ENCODE measurements at regions of chr16 and their contacts with region 1.

Region 1: GRCh38 chr16:4271176-4272066 is 1.4 kb downstream of the TFAP4 start:
- DNase-seq: peak; percentile 97
- H3K4me3 Mint-ChIP-seq: peak overlapping the region; percentile 89
- H3K27ac Mint-ChIP-seq: peak overlapping the region; percentile 96
- H3K4me1 Mint-ChIP-seq: peaks cover 11% of the 10 kb centered on the region
- H3K27me3 Mint-ChIP-seq: no peaks in the 10 kb centered on the region

Region 2: GRCh38 chr16:4253394-4254150 is 17.8 kb before region 1 on chr16:
- intact Hi-C with region 1: loop called (anchors 1 kb)
- DNase-seq: peak; percentile 100
- H3K4me3 Mint-ChIP-seq: peak overlapping the region; percentile 95
- H3K27ac Mint-ChIP-seq: peak overlapping the region; percentile 100
- H3K4me1 Mint-ChIP-seq: peaks cover 5% of the 10 kb centered on the region
- H3K27me3 Mint-ChIP-seq: no peaks in the 10 kb centered on the region

Region 3: GRCh38 chr16:4307215-4308037 is 36.0 kb after region 1 on chr16:
- intact Hi-C with region 1: loop called (anchors 1 kb)
- DNase-seq: peak; percentile 99
- H3K4me3 Mint-ChIP-seq: peak overlapping the region; percentile 98
- H3K27ac Mint-ChIP-seq: peak overlapping the region; percentile 98
- H3K4me1 Mint-ChIP-seq: peaks cover 26% of the 10 kb centered on the region
- H3K27me3 Mint-ChIP-seq: peaks cover 2% of the 10 kb centered on the region

Region 4: GRCh38 chr16:4350787-4351659 is 79.6 kb after region 1 on chr16 and contains the start of gene PAM16:
- intact Hi-C with region 1: loop called (anchors 2 kb)
- DNase-seq: peak; percentile 100
- H3K4me3 Mint-ChIP-seq: peak within 1 kb of the TSS; percentile 96
- H3K27ac Mint-ChIP-seq: peak within 1 kb of the TSS; percentile 94
- H3K4me1 Mint-ChIP-seq: peaks cover 12% of the 10 kb centered on the region
- H3K27me3 Mint-ChIP-seq: no peaks in the 10 kb centered on the region
- total RNA-seq, gene PAM16: 93.5 and 104 TPM in 2 replicates

Measured in activated CD4-positive, alpha-beta T cell treated with anti-CD3 and anti-CD28 coated beads, Interleukin-2, amount 10 ng/mL, durations not matched to agents 24 days and 14 days (primary cell).